Naive thymus-derived CD4-positive, alpha-beta T cell (primary cell): ENCODE measurements at regions of chr17 and their contacts with region 1.

Region 1: GRCh38 chr17:39164675-39165143 is 1.3 kb downstream of the ARL5C start:
- DNase-seq: peak; percentile 41 to 79 (median 72)
- ATAC-seq: peak; percentile 89
- H3K4me3 ChIP-seq: peak overlapping the region; percentile 81
- H3K4me3 Mint-ChIP-seq: peak overlapping the region; percentile 88 to 98 (median 92)
- H3K27ac ChIP-seq: peak overlapping the region; percentile 51
- H3K27ac Mint-ChIP-seq: peak overlapping the region in 6 of 9 donors; percentile 12 to 71 (median 56)
- H3K4me1 ChIP-seq: peaks cover 8 to 15% of the 10 kb centered on the region in 2 donors
- H3K4me1 Mint-ChIP-seq: peaks cover 22 to 34% (median 29%) of the 10 kb centered on the region in 7 donors
- H3K27me3 ChIP-seq: no peaks in the 10 kb centered on the region
- H3K27me3 Mint-ChIP-seq: peaks cover 0 to 42% (median 22%) of the 10 kb centered on the region in 5 donors

Region 2: DNA sequence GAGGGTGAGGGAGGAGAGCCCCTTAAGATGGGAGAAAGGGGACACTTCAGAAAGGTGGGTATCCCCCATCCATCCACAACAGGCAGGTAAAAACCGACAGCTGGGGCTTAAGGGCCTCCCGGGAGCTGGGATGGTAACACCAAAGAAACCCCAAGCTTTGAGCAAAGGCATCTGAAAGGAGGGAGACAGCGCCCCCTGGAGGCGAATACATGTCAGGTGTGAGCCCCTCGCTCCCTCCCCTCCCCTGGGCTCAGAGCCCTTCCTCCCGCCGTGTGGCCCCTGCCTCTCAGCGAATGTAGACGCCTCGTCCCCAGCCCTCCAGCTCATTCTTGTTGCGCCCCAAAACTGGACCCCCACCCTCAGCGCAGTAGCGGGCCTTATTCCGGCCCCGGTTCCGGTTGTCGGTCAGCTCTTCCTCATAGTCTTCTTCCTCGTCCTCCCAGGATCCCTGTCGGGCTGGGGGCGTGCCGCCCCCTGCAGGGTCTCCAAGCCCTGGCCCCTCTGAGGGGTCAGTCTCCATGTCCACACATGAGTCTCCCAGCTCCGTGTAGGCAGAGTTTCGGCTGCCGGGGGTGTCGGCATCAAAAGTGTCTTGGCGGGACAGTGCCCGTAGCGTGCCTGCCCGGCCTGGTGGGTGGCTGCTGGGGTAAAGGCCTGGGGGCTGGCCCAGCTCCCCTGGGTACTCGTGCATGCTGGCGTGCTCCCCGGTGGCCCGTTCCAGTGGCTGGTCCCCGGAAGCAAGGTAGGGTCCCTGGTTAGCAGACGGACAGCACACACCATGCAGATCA is 10.4 kb after region 1 on chr17:
- CTCF ChIA-PET with region 1: interaction called, 38 read pairs
- POLR2A ChIA-PET with region 1: interaction called, 6 read pairs
- intact Hi-C with region 1: loop called in 1 of 2 experiments (anchors 1 kb)
- DNase-seq: peak; percentile 64 to 80 (median 74)
- ATAC-seq: peak; percentile 93
- H3K4me3 ChIP-seq: no peak overlapping the region
- H3K4me3 Mint-ChIP-seq: no peak overlapping the region
- H3K27ac ChIP-seq: no peak overlapping the region
- H3K27ac Mint-ChIP-seq: peak overlapping the region in 3 of 9 donors; percentile 24 to 78 (median 48)
- H3K4me1 ChIP-seq: peaks cover 0 to 8% of the 10 kb centered on the region in 2 donors
- H3K4me1 Mint-ChIP-seq: peaks cover 12 to 29% (median 20%) of the 10 kb centered on the region in 7 donors
- H3K27me3 ChIP-seq: no peaks in the 10 kb centered on the region
- H3K27me3 Mint-ChIP-seq: no peaks in the 10 kb centered on the region

Region 3: DNA sequence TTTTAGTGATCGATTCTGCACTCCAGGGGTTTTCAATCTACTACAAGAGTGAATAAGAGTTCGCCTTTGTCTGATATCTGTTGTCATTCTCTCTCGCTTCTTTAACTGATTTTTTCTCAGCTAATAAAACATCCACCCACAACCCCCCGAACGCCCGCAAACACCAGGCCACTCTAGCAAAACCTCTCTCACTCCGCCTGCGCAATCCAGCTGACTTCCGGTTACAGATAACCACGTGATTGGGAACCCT is 35.0 kb after region 1 on chr17:
- CTCF ChIA-PET with region 1: interaction called, 4 read pairs
- POLR2A ChIA-PET with region 1: interaction called, 11 read pairs
- intact Hi-C with region 1: loop called in 1 of 2 experiments (anchors 1 kb)
- DNase-seq: peak in 7 of 9 donors; percentile 61 to 93 (median 89)
- ATAC-seq: peak; percentile 85
- H3K4me3 ChIP-seq: peak overlapping the region; percentile 83
- H3K4me3 Mint-ChIP-seq: peak overlapping the region; percentile 87 to 98 (median 92)
- H3K27ac ChIP-seq: peak overlapping the region; percentile 98
- H3K27ac Mint-ChIP-seq: peak overlapping the region; percentile 93 to 100 (median 99)
- H3K4me1 ChIP-seq: peaks cover 42 to 46% of the 10 kb centered on the region in 2 donors
- H3K4me1 Mint-ChIP-seq: peaks cover 38 to 72% (median 54%) of the 10 kb centered on the region in 7 donors
- H3K27me3 ChIP-seq: no peaks in the 10 kb centered on the region
- H3K27me3 Mint-ChIP-seq: no peaks in the 10 kb centered on the region

Region 4: GRCh38 chr17:39235555-39236449 is 71.1 kb after region 1 on chr17:
- CTCF ChIA-PET with region 1: interaction called, 8 read pairs
- POLR2A ChIA-PET with region 1: no interaction called
- intact Hi-C with region 1: loop called (anchors 1 to 10 kb)
- DNase-seq: peak in 7 of 9 donors; percentile 35 to 62 (median 51)
- ATAC-seq: peak; percentile 57
- H3K4me3 ChIP-seq: no peak overlapping the region
- H3K4me3 Mint-ChIP-seq: peak overlapping the region in 4 of 10 donors; percentile 0 to 51 (median 8)
- H3K27ac ChIP-seq: no peak overlapping the region
- H3K27ac Mint-ChIP-seq: peak overlapping the region in 8 of 9 donors; percentile 21 to 89 (median 76)
- H3K4me1 ChIP-seq: peaks cover 33 to 43% of the 10 kb centered on the region in 2 donors
- H3K4me1 Mint-ChIP-seq: peaks cover 20 to 45% (median 40%) of the 10 kb centered on the region in 7 donors
- H3K27me3 ChIP-seq: no peaks in the 10 kb centered on the region
- H3K27me3 Mint-ChIP-seq: peaks cover 0 to 13% (median 9%) of the 10 kb centered on the region in 5 donors

Region 5: GRCh38 chr17:39244600-39245570 is 80.2 kb after region 1 on chr17:
- CTCF ChIA-PET with region 1: interaction called, 12 read pairs
- POLR2A ChIA-PET with region 1: no interaction called
- intact Hi-C with region 1: no loop called
- DNase-seq: peak; percentile 74 to 85 (median 81)
- ATAC-seq: peak; percentile 96
- H3K4me3 ChIP-seq: no peak overlapping the region
- H3K4me3 Mint-ChIP-seq: peak overlapping the region in 5 of 10 donors; percentile 12 to 61 (median 38)
- H3K27ac ChIP-seq: no peak overlapping the region
- H3K27ac Mint-ChIP-seq: peak overlapping the region in 6 of 9 donors; percentile 5 to 87 (median 66)
- H3K4me1 ChIP-seq: peaks cover 6 to 10% of the 10 kb centered on the region in 2 donors
- H3K4me1 Mint-ChIP-seq: peaks cover 7 to 16% (median 11%) of the 10 kb centered on the region in 7 donors
- H3K27me3 ChIP-seq: no peaks in the 10 kb centered on the region
- H3K27me3 Mint-ChIP-seq: peaks cover 0 to 4% (median 0%) of the 10 kb centered on the region in 5 donors